ENCODE measurements at regions of chr15 and their contacts with region 1.

Region 1: DNA sequence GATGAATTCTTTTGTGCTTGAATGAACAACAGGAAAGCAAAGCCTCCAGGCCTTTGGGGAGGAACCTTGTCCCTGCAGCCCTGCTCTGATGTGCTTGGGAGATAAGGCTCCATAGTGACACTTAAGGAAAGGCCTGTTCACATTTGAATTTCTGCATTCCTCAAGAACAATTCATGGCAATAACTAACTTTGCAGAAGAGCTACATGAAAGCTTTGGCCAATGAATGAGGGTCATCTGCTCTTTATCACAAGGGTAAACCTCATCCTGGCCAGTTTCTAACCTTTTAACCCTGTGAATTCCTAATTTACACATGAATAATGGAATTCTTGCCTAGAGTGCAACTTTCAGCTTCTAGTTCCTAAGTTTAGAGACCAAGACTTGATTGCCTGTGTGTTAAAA is 5.6 kb downstream of the PRTG start:
- DNase-seq: peak in 3 of 5 donors; percentile 15 to 39 (median 27)
- ATAC-seq: peak in 3 of 4 donors; percentile 64 to 87 (median 66)
- H3K4me3 ChIP-seq: peak overlapping the region in 1 of 12 donors; percentile 0
- H3K27ac ChIP-seq: peak overlapping the region in 6 of 12 donors; percentile 16 to 54 (median 39)
- H3K4me1 ChIP-seq: peaks cover 0 to 16% (median 8%) of the 10 kb centered on the region in 12 donors
- H3K27me3 ChIP-seq: peaks cover 0 to 31% (median 6%) of the 10 kb centered on the region in 9 donors
- CTCF ChIP-seq: no peak
- POLR2A ChIP-seq: no peak

Region 2: DNA sequence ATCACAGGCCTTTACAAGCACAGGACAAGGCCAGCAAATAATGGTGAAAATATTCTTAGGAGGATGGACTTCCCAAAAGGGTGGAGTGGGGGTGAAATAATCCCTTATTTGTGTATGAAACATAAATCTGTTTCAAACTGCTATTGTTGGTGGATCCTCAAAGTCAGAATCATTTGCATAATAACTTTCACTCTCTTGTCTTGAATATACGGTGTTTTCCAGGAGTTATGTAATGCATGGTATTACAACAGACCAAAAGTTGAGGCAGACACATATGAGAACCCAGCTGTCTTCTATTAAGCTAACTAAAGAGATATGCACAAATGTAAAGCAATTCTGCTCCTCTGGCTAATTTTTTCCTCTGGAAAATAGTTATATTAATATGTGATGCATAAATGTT is 52.1 kb before region 1 on chr15:
- intact Hi-C with region 1: loop called in 1 of 10 experiments (anchors 10 kb)
- DNase-seq: no peak
- ATAC-seq: no peak
- H3K4me3 ChIP-seq: no peak overlapping the region
- H3K27ac ChIP-seq: peak overlapping the region in 1 of 12 donors; percentile 23
- H3K4me1 ChIP-seq: peaks cover 0 to 13% (median 0%) of the 10 kb centered on the region in 12 donors
- H3K27me3 ChIP-seq: no peaks in the 10 kb centered on the region
- CTCF ChIP-seq: no peak
- POLR2A ChIP-seq: no peak

Region 3: DNA sequence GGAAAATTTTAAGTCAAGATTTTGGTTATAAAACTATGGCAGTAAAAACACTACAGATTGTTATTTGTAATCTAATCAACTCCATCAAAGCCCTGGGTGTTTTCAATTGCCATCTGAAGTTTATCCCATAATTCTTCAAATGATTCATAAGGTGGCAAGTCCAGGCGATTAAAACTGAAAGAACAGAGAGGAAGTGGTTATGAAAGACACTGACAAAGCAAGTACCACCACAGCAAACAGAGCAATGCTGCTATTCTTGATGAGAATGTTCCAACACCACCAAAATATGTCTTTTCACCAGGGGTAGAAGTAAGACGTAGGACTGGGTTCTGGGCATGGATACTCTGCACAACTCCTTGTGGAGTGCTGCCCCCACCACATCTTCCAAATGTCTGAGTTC is 92.5 kb after region 1 on chr15:
- intact Hi-C with region 1: no loop called
- DNase-seq: no peak
- ATAC-seq: no peak
- H3K4me3 ChIP-seq: no peak overlapping the region
- H3K27ac ChIP-seq: no peak overlapping the region
- H3K4me1 ChIP-seq: peaks cover 0 to 10% (median 0%) of the 10 kb centered on the region in 12 donors
- H3K27me3 ChIP-seq: no peaks in the 10 kb centered on the region
- CTCF ChIP-seq: no peak
- POLR2A ChIP-seq: no peak